Activated naive CD4-positive, alpha-beta T cell treated with anti-CD3 and anti-CD28 coated beads, Interleukin-2, amount 10 ng/mL, durations not matched to agents 7 days and 5 days (primary cell): ENCODE measurements at regions of chr14 and their contacts with region 1.

Region 1: GRCh38 chr14:75577729-75578101 is 705 bp upstream of the FLVCR2 start:
- DNase-seq: peak; percentile 83
- H3K4me3 Mint-ChIP-seq: peak overlapping the region; percentile 81
- H3K27ac Mint-ChIP-seq: peak overlapping the region; percentile 81
- H3K4me1 Mint-ChIP-seq: peaks cover 20% of the 10 kb centered on the region
- H3K27me3 Mint-ChIP-seq: no peaks in the 10 kb centered on the region

Region 2: DNA sequence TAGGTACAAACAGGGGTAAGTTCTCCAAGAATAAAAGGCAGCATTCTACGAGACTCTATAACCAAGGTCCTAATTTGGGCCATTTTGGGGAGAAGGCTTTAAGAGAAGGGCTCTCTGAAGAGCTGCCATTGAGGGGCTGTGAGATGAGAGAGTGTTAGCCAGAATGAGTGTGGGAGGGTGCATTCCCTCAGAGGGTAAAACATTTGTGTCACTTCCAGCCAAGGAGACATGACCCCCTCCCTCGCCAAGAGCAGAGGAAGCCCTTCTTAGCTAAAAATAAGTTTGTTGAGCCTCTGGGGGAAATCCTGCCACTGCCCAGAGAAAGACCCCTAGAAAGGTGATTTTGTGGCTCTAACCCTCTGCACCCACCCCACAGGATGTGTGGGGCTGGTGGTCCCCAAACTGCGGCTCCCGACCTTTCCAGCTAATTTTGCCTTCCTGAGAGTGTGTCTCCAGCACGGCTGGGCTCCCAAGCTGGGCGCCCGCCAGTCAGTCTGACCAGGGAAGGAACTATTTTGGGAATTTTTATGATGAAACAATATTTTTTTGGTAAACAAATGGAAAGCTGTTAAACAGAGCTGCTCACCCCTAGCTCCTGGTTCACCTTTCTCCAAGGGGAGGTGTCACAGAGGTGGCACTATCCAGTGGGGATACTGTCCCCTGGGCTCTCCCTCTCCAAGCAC is 215.8 kb before region 1 on chr14:
- CTCF ChIA-PET with region 1: no interaction called
- DNase-seq: no peak
- H3K4me3 Mint-ChIP-seq: no peak overlapping the region
- H3K27ac Mint-ChIP-seq: no peak overlapping the region
- H3K4me1 Mint-ChIP-seq: peaks cover 11% of the 10 kb centered on the region
- H3K27me3 Mint-ChIP-seq: peaks cover 20% of the 10 kb centered on the region

Region 3: GRCh38 chr14:75427482-75428229 is 150.1 kb before region 1 on chr14 and contains the start of gene JDP2:
- CTCF ChIA-PET with region 1: no interaction called
- DNase-seq: peak; percentile 64
- H3K4me3 Mint-ChIP-seq: peak within 1 kb of the TSS; percentile 74
- H3K27ac Mint-ChIP-seq: peak within 1 kb of the TSS; percentile 56
- H3K4me1 Mint-ChIP-seq: peaks cover 10% of the 10 kb centered on the region
- H3K27me3 Mint-ChIP-seq: peaks cover 57% of the 10 kb centered on the region

Region 4: GRCh38 chr14:75514673-75515628 is 62.8 kb before region 1 on chr14:
- CTCF ChIA-PET with region 1: interaction called, 10 read pairs
- DNase-seq: peak; percentile 53
- H3K4me3 Mint-ChIP-seq: peak overlapping the region; percentile 60
- H3K27ac Mint-ChIP-seq: peak overlapping the region; percentile 58
- H3K4me1 Mint-ChIP-seq: peaks cover 22% of the 10 kb centered on the region
- H3K27me3 Mint-ChIP-seq: peaks cover 4% of the 10 kb centered on the region

Region 5: GRCh38 chr14:75566321-75566720 is 11.4 kb before region 1 on chr14:
- CTCF ChIA-PET with region 1: interaction called, 34 read pairs
- DNase-seq: peak; percentile 81
- H3K4me3 Mint-ChIP-seq: no peak overlapping the region
- H3K27ac Mint-ChIP-seq: peak overlapping the region; percentile 90
- H3K4me1 Mint-ChIP-seq: peaks cover 58% of the 10 kb centered on the region
- H3K27me3 Mint-ChIP-seq: no peaks in the 10 kb centered on the region

Region 6: DNA sequence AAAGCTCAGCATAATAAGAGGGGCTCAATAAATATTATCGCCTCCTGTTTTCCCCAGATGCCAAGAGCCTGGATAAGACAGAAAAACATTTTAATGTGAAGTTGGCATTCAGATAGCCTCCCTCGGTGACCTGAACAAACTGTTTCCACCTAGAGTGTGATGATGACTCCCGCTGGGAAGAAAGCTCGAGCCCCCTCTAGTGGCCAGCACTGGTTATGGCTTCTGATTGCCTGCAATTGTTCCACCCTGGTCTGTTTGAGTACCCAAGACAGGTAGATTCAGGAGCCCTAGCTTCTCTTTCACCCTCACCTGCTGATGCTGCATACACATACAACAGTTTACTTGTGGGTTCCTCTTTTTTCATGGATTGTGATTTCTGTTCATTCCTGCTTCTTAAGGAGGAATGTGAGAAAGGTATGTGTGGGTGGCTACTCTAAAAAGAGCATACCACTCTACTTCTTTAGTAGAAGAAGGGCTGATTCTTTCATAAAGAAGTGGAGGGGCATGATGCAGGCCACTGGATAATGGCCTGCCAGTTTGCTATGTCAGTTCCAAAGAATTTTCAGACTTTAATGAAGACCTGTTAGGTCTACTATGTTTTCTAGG is 76.5 kb after region 1 on chr14:
- CTCF ChIA-PET with region 1: interaction called, 159 read pairs
- DNase-seq: peak; percentile 87
- H3K4me3 Mint-ChIP-seq: no peak overlapping the region
- H3K27ac Mint-ChIP-seq: peak overlapping the region; percentile 11
- H3K4me1 Mint-ChIP-seq: peaks cover 5% of the 10 kb centered on the region
- H3K27me3 Mint-ChIP-seq: no peaks in the 10 kb centered on the region

Region 7: DNA sequence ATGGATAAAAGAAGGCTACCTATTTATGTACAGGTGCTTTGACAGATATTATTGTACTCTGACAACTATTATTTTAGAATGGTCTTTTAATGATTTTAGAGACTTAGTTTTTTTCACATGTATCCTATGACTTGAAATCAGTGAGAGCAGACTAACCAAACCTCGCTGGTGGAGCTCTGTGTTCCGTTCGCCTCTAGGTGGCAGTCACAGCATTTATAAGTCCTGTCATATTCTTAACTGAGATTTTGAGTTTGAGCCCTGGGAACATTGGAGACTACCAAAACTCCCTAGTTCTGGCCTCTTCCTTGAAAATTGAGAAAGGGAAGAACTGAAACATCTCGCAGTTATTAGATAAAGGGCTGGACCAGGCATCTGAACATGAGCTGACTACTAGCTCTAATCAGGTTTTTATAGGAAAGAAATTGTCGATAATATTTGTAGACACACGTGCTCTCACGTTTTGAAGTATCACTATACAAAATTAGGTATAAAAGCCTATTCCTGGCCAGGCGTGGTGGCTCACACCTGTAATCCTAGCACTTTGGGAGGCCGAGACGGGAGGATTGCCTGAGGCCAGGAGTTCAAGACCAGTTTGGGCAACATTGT is 131.6 kb after region 1 on chr14:
- CTCF ChIA-PET with region 1: interaction called, 11 read pairs
- DNase-seq: peak; percentile 78
- H3K4me3 Mint-ChIP-seq: no peak overlapping the region
- H3K27ac Mint-ChIP-seq: no peak overlapping the region
- H3K4me1 Mint-ChIP-seq: no peaks in the 10 kb centered on the region
- H3K27me3 Mint-ChIP-seq: no peaks in the 10 kb centered on the region

Region 8: GRCh38 chr14:75982266-75983018 is 404.7 kb after region 1 on chr14:
- CTCF ChIA-PET with region 1: interaction called, 16 read pairs
- DNase-seq: peak; percentile 84
- H3K4me3 Mint-ChIP-seq: peak overlapping the region; percentile 70
- H3K27ac Mint-ChIP-seq: peak overlapping the region; percentile 74
- H3K4me1 Mint-ChIP-seq: peaks cover 47% of the 10 kb centered on the region
- H3K27me3 Mint-ChIP-seq: peaks cover 20% of the 10 kb centered on the region